ENCODE measurements at regions of chr12 and their contacts with region 1.

Region 1: DNA sequence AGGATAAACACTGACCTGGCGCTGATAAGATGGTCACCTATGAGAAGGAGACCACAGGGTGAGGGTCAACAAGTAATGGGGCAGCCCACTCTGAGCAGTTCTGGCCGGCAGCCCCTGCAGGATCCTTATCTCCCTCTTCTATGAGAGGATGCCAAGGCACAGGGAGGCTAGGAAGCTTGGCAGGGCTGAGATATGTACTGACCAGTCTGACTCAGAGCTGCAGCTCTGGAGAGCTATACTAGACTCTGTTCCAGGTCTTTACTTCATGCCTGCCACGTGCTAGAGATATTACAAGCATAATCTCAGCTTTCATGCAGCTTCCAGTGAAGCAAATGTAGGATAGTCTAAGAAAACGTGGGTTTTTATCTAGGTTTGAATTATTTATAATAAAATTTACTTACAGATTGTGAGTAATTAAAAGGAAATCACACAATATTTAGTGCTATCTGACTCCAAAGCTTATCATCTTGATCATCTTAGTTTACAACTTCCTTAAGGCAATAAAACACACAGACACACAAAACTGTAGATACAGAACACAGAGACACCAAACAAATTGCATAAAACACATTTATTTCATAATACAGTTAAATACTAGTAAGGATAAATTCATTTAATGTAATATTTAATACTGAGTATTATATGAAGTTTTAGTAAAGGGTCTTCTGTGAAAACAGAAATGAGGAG is 32.3 kb downstream of the GIT2 start:
- DNase-seq: no peak
- H3K4me3 ChIP-seq: no peak overlapping the region
- H3K27ac ChIP-seq: no peak overlapping the region
- H3K4me1 ChIP-seq: no peaks in the 10 kb centered on the region
- H3K27me3 ChIP-seq: no peaks in the 10 kb centered on the region
- CTCF ChIP-seq: no peak

Region 2: GRCh38 chr12:109680264-109681005 is 283.5 kb before region 1 on chr12:
- CTCF ChIA-PET with region 1: no interaction called
- dilution Hi-C with region 1: loop called (anchors 10 kb)
- in situ Hi-C with region 1: no loop called
- intact Hi-C with region 1: no loop called
- DNase-seq: no peak
- H3K4me3 ChIP-seq: no peak overlapping the region
- H3K27ac ChIP-seq: no peak overlapping the region
- H3K4me1 ChIP-seq: no peaks in the 10 kb centered on the region
- H3K27me3 ChIP-seq: no peaks in the 10 kb centered on the region
- CTCF ChIP-seq: no peak

Region 3: GRCh38 chr12:109858764-109859163 is 105.1 kb before region 1 on chr12:
- CTCF ChIA-PET with region 1: no interaction called
- dilution Hi-C with region 1: loop called (anchors 5 kb)
- in situ Hi-C with region 1: no loop called
- intact Hi-C with region 1: no loop called
- DNase-seq: no peak
- H3K4me3 ChIP-seq: no peak overlapping the region
- H3K27ac ChIP-seq: no peak overlapping the region
- H3K4me1 ChIP-seq: no peaks in the 10 kb centered on the region
- H3K27me3 ChIP-seq: no peaks in the 10 kb centered on the region
- CTCF ChIP-seq: no peak

Region 4: DNA sequence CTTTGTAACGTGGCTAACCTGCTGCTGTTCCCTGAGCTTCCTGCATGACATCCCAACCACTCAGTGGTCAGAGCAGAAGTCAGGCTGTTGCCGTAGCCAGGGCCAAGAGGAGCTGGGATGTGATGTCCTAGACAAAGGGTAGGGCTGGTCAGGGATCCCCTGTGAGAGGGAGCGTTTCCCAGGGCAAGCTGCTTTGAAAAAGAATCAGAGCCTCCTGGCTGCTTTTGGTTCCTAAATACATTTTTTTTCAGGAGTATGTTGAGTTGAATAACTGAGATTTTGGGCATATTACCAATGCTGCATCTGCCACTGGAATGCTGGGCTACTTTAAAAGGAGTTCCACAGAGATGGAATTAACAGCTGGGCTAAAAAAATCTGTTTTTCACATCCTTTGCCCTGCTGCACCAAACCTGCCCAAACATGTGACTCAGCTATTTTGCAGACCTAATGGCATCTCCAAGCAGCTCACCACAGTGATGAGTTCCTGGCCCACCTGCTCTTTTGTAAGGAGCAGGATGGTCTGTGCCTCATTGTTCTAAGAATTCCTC is 59.2 kb after region 1 on chr12:
- CTCF ChIA-PET with region 1: no interaction called
- dilution Hi-C with region 1: no loop called
- in situ Hi-C with region 1: no loop called
- intact Hi-C with region 1: no loop called
- DNase-seq: peak; percentile 21
- H3K4me3 ChIP-seq: no peak overlapping the region
- H3K27ac ChIP-seq: peak overlapping the region; percentile 22
- H3K4me1 ChIP-seq: peaks cover 25% of the 10 kb centered on the region
- H3K27me3 ChIP-seq: no peaks in the 10 kb centered on the region
- CTCF ChIP-seq: no peak

Region 5: GRCh38 chr12:110033888-110034287 is 70.0 kb after region 1 on chr12:
- CTCF ChIA-PET with region 1: no interaction called
- dilution Hi-C with region 1: loop called (anchors 5 kb)
- in situ Hi-C with region 1: no loop called
- intact Hi-C with region 1: no loop called
- DNase-seq: no peak
- H3K4me3 ChIP-seq: no peak overlapping the region
- H3K27ac ChIP-seq: no peak overlapping the region
- H3K4me1 ChIP-seq: peaks cover 6% of the 10 kb centered on the region
- H3K27me3 ChIP-seq: no peaks in the 10 kb centered on the region
- CTCF ChIP-seq: no peak

Region 6: DNA sequence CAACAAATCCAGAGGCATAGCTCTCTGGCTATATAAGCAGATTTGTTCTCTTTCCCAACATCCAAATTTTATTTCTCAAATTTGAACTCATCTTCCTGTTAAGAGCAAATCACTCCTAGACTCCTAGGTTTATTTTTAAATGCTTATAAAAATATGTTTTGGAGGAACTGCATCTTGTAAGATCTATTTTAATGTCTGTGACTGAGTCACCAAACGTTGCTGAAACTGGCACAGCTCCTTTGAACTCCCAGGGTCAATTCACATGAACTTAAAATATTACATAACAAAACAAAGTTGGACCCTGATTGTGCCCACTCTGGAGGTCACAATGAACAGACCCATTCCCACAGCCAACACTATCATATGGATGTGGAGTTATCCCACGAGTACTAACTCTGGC is 415.7 kb after region 1 on chr12:
- CTCF ChIA-PET with region 1: no interaction called
- dilution Hi-C with region 1: loop called (anchors 10 kb)
- in situ Hi-C with region 1: no loop called
- intact Hi-C with region 1: no loop called
- DNase-seq: no peak
- H3K4me3 ChIP-seq: no peak overlapping the region
- H3K27ac ChIP-seq: no peak overlapping the region
- H3K4me1 ChIP-seq: no peaks in the 10 kb centered on the region
- H3K27me3 ChIP-seq: no peaks in the 10 kb centered on the region
- CTCF ChIP-seq: no peak